Astrocyte of the cerebellum (primary cell): ENCODE measurements at regions of chr16 and their contacts with region 1.

Region 1: GRCh38 chr16:67137605-67138004 is 13.2 kb downstream of the B3GNT9 start:
- DNase-seq: no peak
- H3K4me3 ChIP-seq: no peak overlapping the region
- CTCF ChIP-seq: no peak

Region 2: DNA sequence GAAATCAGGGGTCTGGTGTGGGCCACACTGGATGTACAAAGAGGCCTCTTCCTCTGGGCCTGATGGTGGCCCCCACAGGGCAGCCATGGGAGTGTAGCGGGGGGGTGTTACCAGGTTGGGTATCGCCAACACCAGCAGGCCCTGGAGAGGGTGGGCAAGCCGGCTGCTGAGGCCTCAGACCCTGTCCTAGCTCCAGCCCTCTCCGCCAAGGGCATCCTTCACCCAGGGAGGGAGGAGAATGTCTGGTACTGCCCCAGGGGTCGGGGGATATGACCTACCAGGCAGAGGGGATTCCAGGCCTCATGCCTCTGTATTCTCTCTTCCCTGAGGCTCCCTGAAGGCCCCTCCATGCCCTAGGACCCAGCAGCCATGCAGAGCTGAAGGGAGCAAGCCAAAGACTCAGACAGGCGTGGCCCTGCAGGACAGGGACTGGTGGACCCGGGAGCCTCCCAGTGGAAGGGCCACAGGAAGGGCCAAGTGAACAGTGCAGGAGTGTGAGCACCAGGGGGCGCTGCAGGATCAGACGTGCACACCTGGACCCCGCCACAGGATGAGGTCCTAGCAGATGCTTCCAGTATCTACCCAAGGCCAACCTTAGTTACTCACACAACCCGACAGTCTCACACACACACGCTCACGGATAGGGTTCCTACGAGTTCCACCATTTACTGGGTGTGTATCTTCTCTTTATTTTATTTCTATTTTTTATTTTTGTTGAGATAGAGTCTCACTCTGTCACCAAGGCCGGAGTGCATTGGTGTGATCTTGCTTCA is 160.1 kb before region 1 on chr16:
- in situ Hi-C with region 1: loop called (anchors 5 kb)
- DNase-seq: peak; percentile 49
- H3K4me3 ChIP-seq: no peak overlapping the region
- CTCF ChIP-seq: peak; percentile 86

Region 3: GRCh38 chr16:67040906-67041305 is 96.7 kb before region 1 on chr16:
- in situ Hi-C with region 1: loop called (anchors 5 kb)
- DNase-seq: peak; percentile 44
- H3K4me3 ChIP-seq: no peak overlapping the region
- CTCF ChIP-seq: no peak

Region 4: DNA sequence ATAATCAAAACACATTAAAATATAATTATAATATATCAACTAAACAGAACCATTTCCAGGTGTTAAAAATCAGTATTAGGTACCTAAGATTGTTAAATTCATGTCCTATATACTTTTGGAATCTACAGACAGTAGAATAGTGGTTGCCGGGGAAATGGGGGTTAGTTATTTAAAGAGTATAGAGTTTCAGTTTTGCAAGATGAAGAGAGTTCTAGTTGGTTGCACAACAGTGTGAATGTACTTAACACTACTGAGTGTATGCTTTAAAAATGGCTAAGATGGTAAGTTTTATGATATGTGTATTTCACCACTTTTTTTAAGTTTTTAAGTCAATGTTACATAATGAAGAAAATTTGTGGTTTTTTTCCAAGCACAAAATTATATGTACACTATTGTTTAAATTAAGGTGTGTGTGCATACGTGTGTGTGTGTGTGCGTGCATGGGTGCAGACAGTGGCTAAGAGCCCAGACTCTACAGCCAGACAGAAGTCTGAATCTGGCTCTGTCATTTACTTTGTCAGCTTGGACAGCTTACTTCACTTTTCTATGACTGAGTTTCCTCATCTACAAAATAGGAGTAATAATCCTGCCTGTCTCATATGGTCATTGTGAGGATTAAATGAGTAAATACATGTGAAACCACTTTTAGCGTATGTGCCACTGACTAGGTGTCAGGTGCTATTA is 53.1 kb before region 1 on chr16:
- in situ Hi-C with region 1: loop called (anchors 5 kb)
- DNase-seq: no peak
- H3K4me3 ChIP-seq: no peak overlapping the region
- CTCF ChIP-seq: no peak